Transverse colon (tissue), 4 donors: ENCODE measurements at regions of chr5 and their contacts with region 1.

Region 1: GRCh38 chr5:159133041-159133741 is 33.5 kb upstream of the EBF1 start:
- DNase-seq: no peak
- H3K4me3 ChIP-seq: no peak overlapping the region
- H3K27ac ChIP-seq: no peak overlapping the region
- H3K4me1 ChIP-seq: no peaks in the 10 kb centered on the region
- H3K27me3 ChIP-seq: peaks cover 1% of the 10 kb centered on the region
- CTCF ChIP-seq: peak; percentile 56 to 78 (median 76)
- EP300 ChIP-seq: no peak
- POLR2A ChIP-seq: no peak

Region 2: GRCh38 chr5:157219491-157220271 is 1913.5 kb before region 1 on chr5:
- in situ Hi-C with region 1: no loop called
- intact Hi-C with region 1: loop called (anchors 10 kb)
- DNase-seq: no peak
- H3K4me3 ChIP-seq: no peak overlapping the region
- H3K27ac ChIP-seq: no peak overlapping the region
- H3K4me1 ChIP-seq: no peaks in the 10 kb centered on the region
- H3K27me3 ChIP-seq: no peaks in the 10 kb centered on the region
- CTCF ChIP-seq: no peak
- EP300 ChIP-seq: no peak
- POLR2A ChIP-seq: no peak

Region 3: GRCh38 chr5:157761690-157762621 is 1371.2 kb before region 1 on chr5:
- in situ Hi-C with region 1: loop called in 2 of 4 experiments (anchors 25 kb)
- intact Hi-C with region 1: no loop called
- DNase-seq: peak; percentile 8
- H3K4me3 ChIP-seq: no peak overlapping the region
- H3K27ac ChIP-seq: no peak overlapping the region
- H3K4me1 ChIP-seq: peaks cover 0 to 6% (median 2%) of the 10 kb centered on the region in 4 donors
- H3K27me3 ChIP-seq: no peaks in the 10 kb centered on the region
- CTCF ChIP-seq: peak; percentile 69 to 82 (median 77)
- EP300 ChIP-seq: no peak
- POLR2A ChIP-seq: no peak